ENCODE measurements at regions of chr10 and their contacts with region 1.

Region 1: GRCh38 chr10:82969405-82969804 is 1094.4 kb downstream of the NRG3 start:
- DNase-seq: no peak
- H3K4me3 ChIP-seq: no peak overlapping the region
- H3K27me3 ChIP-seq: no peaks in the 10 kb centered on the region
- CTCF ChIP-seq: peak; percentile 41

Region 2: DNA sequence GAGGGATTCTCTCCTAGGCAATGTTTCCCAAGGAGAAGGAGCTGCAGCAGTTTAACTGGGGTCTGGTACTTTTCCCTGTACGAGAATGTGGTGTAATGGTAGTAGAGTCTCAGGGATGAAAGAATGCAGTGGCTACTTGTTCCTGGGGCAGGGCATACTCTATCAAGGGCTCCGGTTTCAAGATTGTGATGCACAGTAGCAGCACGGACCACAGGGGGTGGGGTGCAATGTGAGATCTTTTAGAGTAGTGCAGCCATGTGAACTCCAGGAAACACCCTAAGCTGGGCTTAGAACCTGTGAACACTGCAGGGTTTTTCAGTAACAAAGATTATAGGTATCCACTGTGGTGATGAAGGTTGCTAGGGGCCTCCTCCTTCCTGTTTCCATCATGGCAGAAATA is 190.5 kb before region 1 on chr10:
- CTCF ChIA-PET with region 1: no interaction called
- POLR2A ChIA-PET with region 1: no interaction called
- DNase-seq: no peak
- H3K4me3 ChIP-seq: no peak overlapping the region
- H3K27me3 ChIP-seq: no peaks in the 10 kb centered on the region
- CTCF ChIP-seq: no peak

Region 3: GRCh38 chr10:82796510-82796909 is 172.9 kb before region 1 on chr10:
- CTCF ChIA-PET with region 1: interaction called, 15 read pairs
- POLR2A ChIA-PET with region 1: no interaction called
- DNase-seq: no peak
- H3K4me3 ChIP-seq: no peak overlapping the region
- H3K27me3 ChIP-seq: no peaks in the 10 kb centered on the region
- CTCF ChIP-seq: peak; percentile 44

Region 4: DNA sequence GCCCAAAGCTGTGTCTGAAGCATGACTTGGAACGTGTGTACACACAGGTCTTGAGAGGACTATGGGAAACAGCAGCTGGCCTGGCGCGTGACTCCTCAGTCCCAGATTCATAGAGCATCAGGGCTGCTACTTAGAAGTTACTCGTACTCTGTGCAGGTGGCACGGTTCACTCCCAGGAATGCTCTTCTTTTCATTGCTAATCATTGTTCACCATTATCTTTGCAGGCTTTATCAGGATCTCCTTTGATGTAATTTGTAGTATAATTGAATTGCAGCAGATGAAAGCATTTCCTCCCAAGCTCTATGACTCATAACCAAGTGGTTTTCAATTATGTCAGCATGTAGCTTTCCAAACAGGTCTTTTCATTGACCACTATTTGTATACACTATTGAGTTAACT is 155.5 kb before region 1 on chr10:
- CTCF ChIA-PET with region 1: interaction called, 15 read pairs
- POLR2A ChIA-PET with region 1: no interaction called
- DNase-seq: no peak
- H3K4me3 ChIP-seq: no peak overlapping the region
- H3K27me3 ChIP-seq: no peaks in the 10 kb centered on the region
- CTCF ChIP-seq: no peak

Region 5: GRCh38 chr10:82953909-82954308 is 15.5 kb before region 1 on chr10:
- CTCF ChIA-PET with region 1: interaction called, 15 read pairs
- POLR2A ChIA-PET with region 1: no interaction called
- DNase-seq: no peak
- H3K4me3 ChIP-seq: no peak overlapping the region
- H3K27me3 ChIP-seq: no peaks in the 10 kb centered on the region
- CTCF ChIP-seq: no peak

Region 6: GRCh38 chr10:82982110-82982608 is 12.8 kb after region 1 on chr10:
- CTCF ChIA-PET with region 1: interaction called, 11 read pairs
- POLR2A ChIA-PET with region 1: no interaction called
- DNase-seq: peak; percentile 98
- H3K4me3 ChIP-seq: no peak overlapping the region
- H3K27me3 ChIP-seq: no peaks in the 10 kb centered on the region
- CTCF ChIP-seq: no peak